GM10248 (cell line): ENCODE measurements at regions of chr9 and their contacts with region 1.

Region 1: GRCh38 chr9:99819856-99820684 is 1.6 kb upstream of the NR4A3 start:
- DNase-seq: peak; percentile 89
- CTCF ChIP-seq: peak; percentile 15

Region 2: GRCh38 chr9:99833735-99834134 is 13.7 kb after region 1 on chr9:
- CTCF ChIA-PET with region 1: interaction called, 12 read pairs
- POLR2A ChIA-PET with region 1: interaction called, 4 read pairs
- DNase-seq: no peak
- CTCF ChIP-seq: no peak

Region 3: DNA sequence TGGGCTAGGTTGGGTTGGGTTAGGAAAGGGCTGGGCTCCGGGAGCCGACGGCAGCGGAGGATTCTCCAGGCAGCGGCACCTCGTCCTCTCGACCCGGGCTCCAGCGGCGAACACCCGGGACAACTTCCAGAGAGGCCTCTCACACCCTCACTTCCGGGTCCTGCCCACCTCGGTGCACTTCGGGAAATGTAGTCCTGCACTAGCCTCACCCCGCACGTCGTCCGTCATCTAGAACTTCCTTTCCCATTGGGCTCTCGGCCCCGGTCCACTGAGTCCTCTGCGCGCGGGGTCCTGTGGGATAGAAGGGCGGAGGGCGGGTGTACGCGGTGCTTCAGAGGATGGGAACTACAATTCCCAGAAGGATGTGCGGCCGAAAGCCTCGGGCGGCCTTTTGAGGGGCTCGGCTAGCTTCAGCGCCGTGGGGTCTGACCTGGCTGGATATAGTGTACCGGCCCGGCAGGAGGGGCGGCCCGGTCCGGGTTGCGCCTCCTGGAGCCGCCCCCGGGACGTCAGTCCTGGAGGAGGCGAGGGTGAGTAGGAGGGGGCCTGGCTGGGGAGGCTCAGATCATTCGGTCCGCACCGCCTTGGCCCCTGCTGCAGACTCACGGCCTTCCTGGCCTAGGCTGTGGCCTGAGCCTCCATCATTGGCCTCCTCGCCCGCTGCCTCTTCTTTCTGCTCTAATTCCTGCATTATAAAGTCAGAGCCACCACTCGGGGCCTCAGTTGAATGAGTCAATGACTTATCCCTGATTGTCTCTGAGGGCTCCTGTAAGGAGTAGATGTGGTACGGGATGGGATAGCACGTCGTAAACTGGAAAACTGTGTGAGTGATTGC is 279.0 kb after region 1 on chr9 and contains the starts of genes ERP44 and INVS:
- CTCF ChIA-PET with region 1: no interaction called
- POLR2A ChIA-PET with region 1: no interaction called
- DNase-seq: peak; percentile 97
- CTCF ChIP-seq: no peak